Activated T-helper 2 cell treated with anti-CD3 and anti-CD28 coated beads, Interferon-gamma antibody, Interleukin-2, Interleukin-4, amounts not matched to agents 10 μg/mL and 5 μg/mL and 100 μg/mL, durations not matched to agents 14 hours and 24 hours and 36 hours (primary cell): ENCODE measurements at regions of chr14 and their contacts with region 1.

Region 1: DNA sequence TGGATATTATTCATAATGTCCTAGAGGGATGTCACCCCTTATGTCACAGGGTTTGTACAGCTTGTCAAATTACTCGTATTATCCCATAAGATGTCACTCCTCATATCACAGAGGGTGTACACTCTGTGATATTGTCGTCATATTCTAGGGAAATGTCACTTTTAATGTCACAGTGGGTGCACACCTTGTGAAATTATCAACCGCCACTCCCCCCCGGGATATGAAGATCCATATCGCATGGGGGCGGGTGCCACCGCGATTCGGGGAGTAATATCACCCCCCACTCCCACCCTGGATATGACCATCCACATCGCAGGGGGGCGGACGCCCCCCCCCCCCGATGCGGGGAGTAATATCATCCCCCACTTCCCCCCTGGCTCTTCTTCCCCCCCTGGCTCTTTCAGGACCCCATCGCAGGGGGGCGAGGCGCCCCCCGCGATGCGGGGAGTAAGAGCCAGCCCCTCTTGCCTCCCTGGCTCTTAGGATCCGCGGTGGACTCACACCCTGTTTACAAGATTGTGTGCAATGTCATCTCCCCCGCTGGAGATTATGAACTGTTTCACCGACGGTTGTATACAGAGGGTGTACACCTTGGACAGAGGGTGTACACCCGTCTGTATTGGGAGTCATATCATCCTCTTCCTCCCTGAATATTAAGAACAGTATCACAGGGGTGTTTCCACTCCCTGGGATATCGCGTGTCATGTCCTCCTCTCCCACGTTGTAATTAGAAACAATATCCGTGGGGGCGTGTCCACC is 92.8 kb downstream of the FRMD6 start:
- DNase-seq: no peak
- H3K4me3 Mint-ChIP-seq: no peak overlapping the region
- H3K27ac Mint-ChIP-seq: no peak overlapping the region
- H3K4me1 Mint-ChIP-seq: no peaks in the 10 kb centered on the region
- H3K27me3 Mint-ChIP-seq: no peaks in the 10 kb centered on the region

Region 2: DNA sequence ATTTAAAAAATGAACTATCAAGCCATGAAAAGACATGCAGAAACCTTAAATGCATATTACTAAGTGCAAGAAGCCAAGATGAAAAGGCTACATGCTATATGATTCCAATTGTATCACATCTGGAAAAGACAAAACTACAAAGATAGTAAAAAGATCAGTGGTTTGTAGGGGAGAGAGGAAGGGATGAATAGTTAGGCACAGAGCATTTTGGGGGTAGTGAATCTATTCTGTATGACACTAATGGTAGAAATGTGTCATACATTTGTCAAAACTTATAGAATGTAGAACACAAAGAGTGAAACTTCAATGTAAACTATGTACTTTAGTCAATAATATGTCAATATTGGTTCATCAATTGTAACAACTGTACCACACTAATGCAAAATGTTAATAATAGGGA is 786.9 kb after region 1 on chr14:
- intact Hi-C with region 1: loop called (anchors 5 kb)
- DNase-seq: no peak
- H3K4me3 Mint-ChIP-seq: no peak overlapping the region
- H3K27ac Mint-ChIP-seq: no peak overlapping the region
- H3K4me1 Mint-ChIP-seq: no peaks in the 10 kb centered on the region
- H3K27me3 Mint-ChIP-seq: no peaks in the 10 kb centered on the region